OCI-LY7 (cell line): ENCODE measurements at regions of chr10 and their contacts with region 1.

Region 1: GRCh38 chr10:73413528-73414229 is at the start of gene ANXA7:
- DNase-seq: peak; percentile 92
- H3K4me3 ChIP-seq: peak within 1 kb of the TSS; percentile 77
- H3K27ac ChIP-seq: peak within 1 kb of the TSS; percentile 54
- H3K4me1 ChIP-seq: peaks cover 18% of the 10 kb centered on the region
- CTCF ChIP-seq: no peak
- total RNA-seq, gene ANXA7: 36.5 and 52.0 TPM in 2 replicates

Region 2: DNA sequence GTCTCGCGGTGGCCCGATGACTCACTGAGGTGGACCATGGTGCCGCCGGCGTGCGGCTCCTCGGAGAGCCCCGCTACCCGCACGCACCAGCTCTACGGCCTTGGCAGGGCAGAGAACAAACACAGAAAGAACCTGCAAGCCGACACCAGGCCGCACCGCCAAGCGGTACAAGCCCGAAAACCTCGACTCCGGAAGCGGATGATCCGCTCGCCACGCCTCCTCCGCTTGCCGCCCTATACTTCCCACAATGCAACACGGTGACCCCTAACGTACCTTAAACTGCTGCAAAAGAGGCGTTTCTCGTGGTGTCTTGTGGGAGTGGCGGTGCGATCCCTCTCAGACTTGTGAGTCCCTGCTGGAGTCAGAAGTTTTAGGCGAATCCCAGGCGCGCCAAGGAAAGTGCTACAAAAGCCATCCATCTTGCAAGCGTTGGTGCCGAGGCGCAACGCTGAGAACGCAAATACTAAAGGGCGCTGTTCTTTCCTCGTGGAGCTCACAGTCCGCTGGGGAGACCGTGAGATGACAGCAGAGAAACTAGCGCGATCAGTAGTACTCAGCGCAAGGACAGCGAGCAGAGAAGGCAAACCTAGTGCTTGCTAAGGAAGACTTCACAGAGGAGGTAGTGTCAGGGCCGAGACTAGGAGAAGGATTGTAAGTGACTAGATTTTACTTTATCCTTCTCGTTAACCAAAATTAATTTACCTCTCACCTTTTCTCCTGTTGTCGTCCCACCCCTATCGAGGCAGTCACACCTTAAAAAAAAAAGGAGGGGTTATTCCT is 161.0 kb before region 1 on chr10 and contains the start of gene MRPS16:
- CTCF ChIA-PET with region 1: no interaction called
- POLR2A ChIA-PET with region 1: interaction called, 6 read pairs
- intact Hi-C with region 1: loop called (anchors 2 kb)
- DNase-seq: peak; percentile 96
- H3K4me3 ChIP-seq: peak within 1 kb of the TSS; percentile 86
- H3K27ac ChIP-seq: peak within 1 kb of the TSS; percentile 79
- H3K4me1 ChIP-seq: peaks cover 43% of the 10 kb centered on the region
- CTCF ChIP-seq: no peak
- total RNA-seq, gene MRPS16: 56.6 and 81.6 TPM in 2 replicates

Region 3: DNA sequence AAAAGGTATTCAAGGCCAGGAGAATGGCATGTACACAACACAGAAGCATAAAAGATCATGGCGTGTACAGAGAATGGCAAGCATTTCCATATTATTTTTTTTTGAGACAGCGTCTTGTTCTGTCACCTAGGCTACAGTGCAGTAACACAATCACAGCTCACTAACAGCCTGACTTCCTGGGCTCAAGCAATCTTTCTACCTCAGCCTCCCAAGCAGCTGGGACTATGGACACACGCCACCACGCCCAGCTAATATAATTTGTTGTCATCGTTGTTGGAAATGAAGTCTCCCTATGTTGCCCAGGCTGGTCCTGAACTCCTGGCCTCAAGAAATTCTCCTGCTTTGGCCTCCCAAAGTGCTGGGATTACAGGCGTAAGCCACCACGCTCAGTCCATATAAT is 27.1 kb before region 1 on chr10:
- CTCF ChIA-PET with region 1: no interaction called
- POLR2A ChIA-PET with region 1: interaction called, 10 read pairs
- intact Hi-C with region 1: no loop called
- DNase-seq: no peak
- H3K4me3 ChIP-seq: no peak overlapping the region
- H3K27ac ChIP-seq: no peak overlapping the region
- H3K4me1 ChIP-seq: no peaks in the 10 kb centered on the region
- CTCF ChIP-seq: no peak

Region 4: DNA sequence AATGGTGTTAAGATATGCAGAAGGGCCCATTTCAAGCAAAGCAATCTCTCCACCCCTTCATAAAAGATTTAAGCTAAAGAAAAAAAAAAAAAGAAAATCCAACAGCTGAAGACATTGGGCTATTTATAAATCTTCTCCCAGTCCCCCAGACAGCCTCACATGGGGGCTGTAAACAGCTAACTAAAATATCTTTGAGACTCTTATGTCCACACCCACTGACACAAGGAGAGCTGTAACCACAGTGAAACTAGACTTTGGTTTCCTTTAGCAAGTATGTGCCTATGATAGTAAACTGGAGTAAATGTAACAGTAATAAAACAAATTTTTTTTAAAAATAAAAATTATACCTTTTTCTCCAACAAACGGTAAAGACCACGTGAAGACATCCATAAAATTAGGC is 53.5 kb after region 1 on chr10:
- CTCF ChIA-PET with region 1: no interaction called
- POLR2A ChIA-PET with region 1: no interaction called
- intact Hi-C with region 1: no loop called
- DNase-seq: no peak
- H3K4me3 ChIP-seq: no peak overlapping the region
- H3K27ac ChIP-seq: no peak overlapping the region
- H3K4me1 ChIP-seq: no peaks in the 10 kb centered on the region
- CTCF ChIP-seq: no peak

Region 5: DNA sequence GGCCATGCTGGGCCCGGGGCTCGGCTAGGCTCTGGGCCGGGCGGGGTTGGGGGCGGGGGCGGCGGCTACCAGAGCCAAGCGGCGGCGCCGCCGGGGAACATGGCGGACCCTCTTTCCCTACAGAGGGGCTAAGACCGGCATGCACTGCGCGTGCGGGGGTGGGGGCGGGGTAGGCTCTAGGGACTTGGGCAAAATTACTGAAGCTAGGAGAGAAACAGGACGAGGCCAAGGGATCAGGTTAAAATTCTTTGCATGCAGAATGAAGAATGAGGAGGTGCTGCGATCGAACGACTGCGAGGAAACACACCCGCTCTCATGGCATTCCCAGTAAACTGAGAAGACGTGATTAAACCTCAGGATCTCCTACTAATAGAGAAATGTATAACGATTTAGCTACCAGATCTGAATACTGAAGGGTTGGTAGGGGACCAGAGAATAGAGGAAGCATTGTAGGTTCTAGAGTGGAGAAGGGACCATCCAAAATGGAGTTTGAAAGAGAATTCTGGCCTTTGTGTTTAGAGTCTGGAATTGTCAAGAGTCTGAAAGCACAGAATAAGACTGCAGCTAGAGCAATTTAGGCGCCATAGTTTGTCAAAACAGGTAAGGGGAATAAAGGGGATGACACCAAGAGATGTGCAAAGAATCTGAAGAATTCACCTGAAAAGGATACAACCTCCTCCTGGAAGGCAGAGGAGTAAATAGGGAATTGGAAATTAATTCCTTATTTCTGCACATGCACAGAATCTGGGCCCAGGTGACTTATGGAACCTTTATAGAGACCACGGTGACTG is 82.4 kb after region 1 on chr10 and contains the start of gene PPP3CB:
- CTCF ChIA-PET with region 1: no interaction called
- POLR2A ChIA-PET with region 1: interaction called, 5 read pairs
- intact Hi-C with region 1: loop called (anchors 2 kb)
- DNase-seq: peak; percentile 93
- H3K4me3 ChIP-seq: peak within 1 kb of the TSS; percentile 92
- H3K27ac ChIP-seq: peak within 1 kb of the TSS; percentile 79
- H3K4me1 ChIP-seq: peaks cover 26% of the 10 kb centered on the region
- CTCF ChIP-seq: no peak
- total RNA-seq, gene PPP3CB: 15.5 and 18.6 TPM in 2 replicates